ENCODE measurements at regions of chr5 and their contacts with region 1.

Region 1: DNA sequence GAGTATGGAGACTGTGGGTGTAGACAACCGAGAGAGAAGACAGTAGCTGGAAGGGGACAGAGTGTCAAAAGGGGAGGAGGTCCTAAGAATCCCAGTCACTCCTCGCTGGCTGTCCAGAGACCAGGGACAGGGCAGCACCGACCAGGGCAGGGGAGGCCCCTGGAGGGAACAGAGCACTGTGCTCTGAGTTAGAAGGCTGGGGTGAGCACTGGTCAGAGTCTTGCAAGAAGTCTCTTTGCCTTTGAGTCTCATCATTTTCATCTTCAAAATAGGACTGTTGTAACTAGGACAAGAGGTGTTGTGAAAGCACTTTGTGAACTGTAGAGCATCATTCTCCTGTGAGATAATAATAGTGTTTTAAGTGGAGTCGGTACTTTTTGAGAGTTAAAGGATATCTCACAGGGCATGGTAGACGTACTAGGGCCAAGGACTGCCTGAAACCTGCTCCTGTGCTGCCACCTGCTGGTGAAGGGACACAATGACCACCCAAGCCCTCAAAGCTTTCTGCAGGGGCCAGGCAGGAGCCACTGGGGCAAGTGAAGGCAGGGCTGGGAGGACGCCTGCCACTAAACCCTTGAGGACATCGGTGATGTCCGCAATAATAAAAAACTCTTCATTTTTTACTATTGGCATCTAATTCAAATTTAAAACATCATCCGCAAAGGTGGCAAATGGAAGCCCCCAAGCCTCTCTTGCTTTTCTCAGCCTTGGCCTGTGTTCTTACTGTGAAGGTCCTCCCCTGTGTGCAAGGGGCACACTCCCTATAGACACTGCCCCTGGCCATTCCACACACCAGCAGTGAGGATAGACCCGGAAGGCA is 28.2 kb downstream of the SLC6A7 start:
- DNase-seq: peak; percentile 59
- H3K4me3 ChIP-seq: no peak overlapping the region
- H3K27ac ChIP-seq: no peak overlapping the region
- H3K4me1 ChIP-seq: no peaks in the 10 kb centered on the region
- H3K27me3 ChIP-seq: no peaks in the 10 kb centered on the region
- CTCF ChIP-seq: peak; percentile 82 to 83

Region 2: DNA sequence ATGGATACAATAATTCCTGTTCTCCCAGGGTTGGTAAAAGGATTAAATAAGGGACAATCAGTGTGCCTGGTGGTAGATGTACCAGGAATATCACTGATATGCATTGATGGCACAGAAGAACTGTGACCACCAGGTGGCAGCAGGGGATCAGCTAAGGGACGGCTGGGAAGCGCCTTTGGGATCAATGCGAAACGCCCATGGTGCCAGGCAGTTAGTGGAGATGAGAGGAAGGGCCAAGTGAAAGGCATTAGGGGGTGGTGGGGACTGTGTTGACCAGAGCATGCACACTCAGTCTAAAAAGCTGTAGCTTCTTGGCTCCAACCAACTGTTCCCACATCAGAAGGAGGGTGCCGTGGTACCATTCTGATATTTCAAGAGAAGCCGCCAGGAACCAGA is 581.2 kb before region 1 on chr5:
- CTCF ChIA-PET with region 1: no interaction called
- dilution Hi-C with region 1: no loop called
- in situ Hi-C with region 1: no loop called
- intact Hi-C with region 1: loop called (anchors 2 kb)
- DNase-seq: peak; percentile 56
- H3K4me3 ChIP-seq: no peak overlapping the region
- H3K27ac ChIP-seq: peak overlapping the region; percentile 97
- H3K4me1 ChIP-seq: peaks cover 49% of the 10 kb centered on the region
- H3K27me3 ChIP-seq: no peaks in the 10 kb centered on the region
- CTCF ChIP-seq: peak; percentile 78 to 85

Region 3: DNA sequence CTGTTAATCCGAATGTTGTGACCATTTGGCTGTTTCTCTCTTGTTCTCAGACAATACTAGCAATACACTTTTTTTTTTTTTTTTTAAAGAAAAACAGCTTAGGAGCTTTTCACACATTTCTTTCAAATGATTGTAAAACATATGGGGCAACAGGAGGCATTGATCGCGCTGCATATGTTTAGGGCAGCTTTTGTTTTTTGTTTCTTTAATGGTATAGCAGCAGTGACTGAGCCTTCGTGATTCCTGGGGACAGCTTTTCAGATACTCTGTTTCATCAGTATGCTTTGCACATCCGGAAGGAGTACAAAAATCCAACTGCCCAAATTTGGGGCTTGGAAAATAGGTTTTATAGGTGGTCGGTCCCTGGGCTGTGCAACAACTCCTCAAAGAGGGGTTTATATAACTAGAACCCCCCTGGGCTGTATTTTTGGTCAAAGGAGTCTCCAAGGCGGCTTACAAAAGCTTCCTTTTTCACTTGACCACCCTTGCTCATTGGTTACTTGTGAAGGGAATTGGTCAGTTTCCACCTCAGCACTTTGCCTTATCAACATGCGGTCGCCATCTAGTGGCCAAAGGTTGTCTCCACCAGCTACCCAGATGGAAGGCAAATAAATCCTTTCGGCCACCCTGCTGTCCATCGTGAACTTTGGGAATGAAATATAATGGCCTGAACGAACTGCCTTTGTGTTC is 365.3 kb before region 1 on chr5:
- CTCF ChIA-PET with region 1: no interaction called
- dilution Hi-C with region 1: no loop called
- in situ Hi-C with region 1: loop called (anchors 25 kb)
- intact Hi-C with region 1: loop called (anchors 5 kb)
- DNase-seq: peak; percentile 49
- H3K4me3 ChIP-seq: no peak overlapping the region
- H3K27ac ChIP-seq: no peak overlapping the region
- H3K4me1 ChIP-seq: peaks cover 10% of the 10 kb centered on the region
- H3K27me3 ChIP-seq: no peaks in the 10 kb centered on the region
- CTCF ChIP-seq: peak; percentile 91 to 97

Region 4: DNA sequence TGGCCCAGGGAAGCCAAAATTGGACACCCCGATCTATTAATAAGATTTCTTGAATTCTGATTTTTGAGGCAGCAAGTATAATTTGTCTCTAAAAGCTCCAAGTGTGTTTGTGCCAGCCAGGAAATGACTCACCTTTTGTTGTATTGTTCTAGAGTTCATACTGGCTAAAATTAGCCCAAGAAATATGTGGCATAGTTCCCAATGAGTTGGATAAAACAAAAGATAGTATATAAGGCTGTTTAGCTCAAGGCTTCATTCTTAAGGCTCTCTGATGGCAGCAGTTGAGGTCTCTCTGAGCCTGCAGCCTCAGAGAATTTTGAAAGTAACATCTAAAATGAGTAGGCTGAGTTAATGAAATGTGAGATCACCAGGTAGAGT is 195.9 kb before region 1 on chr5:
- CTCF ChIA-PET with region 1: no interaction called
- dilution Hi-C with region 1: no loop called
- in situ Hi-C with region 1: no loop called
- intact Hi-C with region 1: loop called (anchors 10 kb)
- DNase-seq: peak; percentile 88
- H3K4me3 ChIP-seq: peak overlapping the region in 2 of 3 experiments; percentile 1 to 16
- H3K27ac ChIP-seq: peak overlapping the region; percentile 81
- H3K4me1 ChIP-seq: peaks cover 68% of the 10 kb centered on the region
- H3K27me3 ChIP-seq: no peaks in the 10 kb centered on the region
- CTCF ChIP-seq: no peak

Region 5: GRCh38 chr5:150175076-150175935 is 42.8 kb before region 1 on chr5:
- CTCF ChIA-PET with region 1: no interaction called
- dilution Hi-C with region 1: no loop called
- in situ Hi-C with region 1: no loop called
- intact Hi-C with region 1: no loop called
- DNase-seq: peak; percentile 7
- H3K4me3 ChIP-seq: no peak overlapping the region
- H3K27ac ChIP-seq: no peak overlapping the region
- H3K4me1 ChIP-seq: no peaks in the 10 kb centered on the region
- H3K27me3 ChIP-seq: no peaks in the 10 kb centered on the region
- CTCF ChIP-seq: peak; percentile 31 to 48

Region 6: GRCh38 chr5:150253205-150253811 is 35.2 kb after region 1 on chr5:
- CTCF ChIA-PET with region 1: no interaction called
- dilution Hi-C with region 1: loop called (anchors 5 kb)
- in situ Hi-C with region 1: no loop called
- intact Hi-C with region 1: no loop called
- DNase-seq: no peak
- H3K4me3 ChIP-seq: no peak overlapping the region
- H3K27ac ChIP-seq: no peak overlapping the region
- H3K4me1 ChIP-seq: no peaks in the 10 kb centered on the region
- H3K27me3 ChIP-seq: no peaks in the 10 kb centered on the region
- CTCF ChIP-seq: no peak

Region 7: DNA sequence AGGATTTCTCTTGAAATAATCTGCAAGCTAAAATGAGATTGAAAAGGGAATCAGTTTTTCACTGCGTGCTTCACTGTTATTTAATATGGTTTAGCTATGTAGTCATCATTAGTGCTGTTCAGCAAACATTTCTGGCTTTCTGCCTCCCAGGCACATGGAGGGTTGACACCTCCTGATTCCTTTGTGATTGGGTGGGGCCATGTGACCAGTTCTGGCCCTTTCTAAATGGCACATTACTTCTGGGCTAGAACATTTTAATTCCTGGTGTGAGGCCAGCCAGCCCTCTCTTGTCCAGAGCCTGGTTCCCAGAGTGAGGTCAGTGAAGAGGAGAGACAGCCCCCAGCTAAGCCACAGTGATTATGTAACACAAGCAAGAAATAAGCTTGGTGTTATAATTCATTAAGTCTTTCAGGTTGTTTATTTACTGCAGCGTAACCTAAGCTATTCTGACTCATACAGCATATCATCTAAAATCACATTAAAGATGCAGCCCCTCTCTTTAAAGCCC is 102.0 kb after region 1 on chr5:
- CTCF ChIA-PET with region 1: no interaction called
- dilution Hi-C with region 1: no loop called
- in situ Hi-C with region 1: no loop called
- intact Hi-C with region 1: no loop called
- DNase-seq: peak; percentile 87
- H3K4me3 ChIP-seq: no peak overlapping the region
- H3K27ac ChIP-seq: peak overlapping the region; percentile 92
- H3K4me1 ChIP-seq: peaks cover 64% of the 10 kb centered on the region
- H3K27me3 ChIP-seq: no peaks in the 10 kb centered on the region
- CTCF ChIP-seq: no peak

Region 8: DNA sequence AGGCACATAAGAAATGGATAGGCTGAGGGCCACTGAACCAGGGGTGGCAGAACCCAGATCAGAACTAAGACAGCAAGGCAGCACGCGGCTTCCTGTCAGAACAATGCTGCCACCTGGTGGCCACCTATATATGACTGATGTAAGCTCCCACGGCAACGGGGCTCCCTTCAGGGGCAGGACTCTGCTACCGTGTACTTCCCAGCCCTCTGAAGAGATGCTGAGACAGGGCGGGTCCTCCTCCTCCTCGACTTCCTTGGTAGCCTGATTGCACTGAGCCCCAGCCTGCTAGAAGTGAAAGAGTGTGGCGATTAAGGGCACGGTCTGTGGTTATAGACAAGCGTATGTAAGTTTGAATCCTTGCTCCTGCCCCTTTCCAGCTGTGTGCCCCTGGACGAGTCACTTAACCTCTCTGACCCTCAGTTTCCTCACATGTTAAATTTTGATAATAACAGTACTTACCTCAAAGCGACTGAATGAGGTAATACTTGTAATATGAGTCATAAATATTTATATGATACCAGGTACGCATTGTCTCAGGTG is 218.1 kb after region 1 on chr5:
- CTCF ChIA-PET with region 1: no interaction called
- dilution Hi-C with region 1: no loop called
- in situ Hi-C with region 1: no loop called
- intact Hi-C with region 1: loop called (anchors 1 kb)
- DNase-seq: peak; percentile 73
- H3K4me3 ChIP-seq: no peak overlapping the region
- H3K27ac ChIP-seq: no peak overlapping the region
- H3K4me1 ChIP-seq: peaks cover 9% of the 10 kb centered on the region
- H3K27me3 ChIP-seq: no peaks in the 10 kb centered on the region
- CTCF ChIP-seq: peak; percentile 74 to 84

Region 9: GRCh38 chr5:150458819-150459557 is 240.9 kb after region 1 on chr5:
- CTCF ChIA-PET with region 1: no interaction called
- dilution Hi-C with region 1: no loop called
- in situ Hi-C with region 1: no loop called
- intact Hi-C with region 1: no loop called
- DNase-seq: peak; percentile 39
- H3K4me3 ChIP-seq: peak overlapping the region in 1 of 3 experiments; percentile 9
- H3K27ac ChIP-seq: no peak overlapping the region
- H3K4me1 ChIP-seq: peaks cover 7% of the 10 kb centered on the region
- H3K27me3 ChIP-seq: no peaks in the 10 kb centered on the region
- CTCF ChIP-seq: peak; percentile 58 to 84

Measured in mammary epithelial cell (primary cell).